A549 (cell line): ENCODE measurements at regions of chr19 and their contacts with region 1.

Region 1: GRCh38 chr19:41563854-41564514 is 12.0 kb upstream of the CEACAM21 start:
- DNase-seq: peak in 1 of 2 experiments; percentile 35
- ATAC-seq: peak in 1 of 2 experiments; percentile 28; a peak in 2 of 6 replicates
- H3K4me3 ChIP-seq: no peak overlapping the region
- H3K27ac ChIP-seq: no peak overlapping the region
- H3K4me1 ChIP-seq: peaks cover 13% of the 10 kb centered on the region; the same call in 2 of the 3 replicates
- CTCF ChIP-seq: no peak
- EP300 ChIP-seq: no peak
- POLR2A ChIP-seq: no peak
- RAD21 ChIP-seq: no peak

Region 2: GRCh38 chr19:41420101-41420880 is 143.7 kb before region 1 on chr19:
- CTCF ChIA-PET with region 1: interaction called, 18 read pairs
- POLR2A ChIA-PET with region 1: no interaction called
- DNase-seq: no peak
- ATAC-seq: no peak
- H3K4me3 ChIP-seq: no peak overlapping the region
- H3K27ac ChIP-seq: no peak overlapping the region
- H3K4me1 ChIP-seq: no peaks in the 10 kb centered on the region
- CTCF ChIP-seq: no peak
- EP300 ChIP-seq: no peak
- POLR2A ChIP-seq: no peak
- RAD21 ChIP-seq: no peak

Region 3: DNA sequence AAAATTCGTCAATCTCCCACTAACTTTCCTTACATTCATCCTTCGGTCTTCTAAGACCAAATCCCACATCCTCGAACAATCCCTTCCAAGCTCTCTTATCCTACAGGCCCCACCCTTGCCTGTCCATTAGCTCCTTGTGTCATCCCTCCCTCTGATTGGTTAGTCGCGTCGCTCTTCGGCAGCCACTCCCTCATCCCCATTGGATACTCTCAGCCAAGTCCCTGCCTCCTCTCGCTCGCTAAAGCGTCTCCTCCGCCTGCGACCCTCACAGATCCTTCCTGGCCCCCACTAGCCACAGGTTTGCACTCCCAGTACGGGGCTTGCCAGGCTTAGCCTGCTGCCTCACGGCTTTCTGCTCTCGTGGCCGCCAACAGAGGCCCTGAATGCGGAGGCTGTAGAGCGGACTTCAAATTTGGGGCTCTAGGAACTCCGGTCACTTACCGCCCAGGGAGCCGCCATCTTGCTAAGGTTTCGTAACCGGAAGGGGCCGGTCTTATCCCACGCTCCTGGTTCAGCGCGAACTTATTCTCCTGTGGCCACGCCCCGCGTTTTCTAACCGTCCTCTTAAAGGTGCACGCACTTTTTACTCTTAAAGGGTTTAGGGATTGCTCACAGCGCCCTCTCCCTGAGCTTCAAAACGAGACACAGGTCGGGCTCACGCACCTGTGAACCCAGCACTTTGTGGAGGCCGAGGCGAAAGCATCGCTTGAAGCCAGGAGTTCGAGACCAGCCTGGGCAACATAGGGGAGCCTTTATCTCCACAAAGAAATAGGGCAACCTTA is 124.4 kb before region 1 on chr19 and contains the start of gene DMAC2:
- CTCF ChIA-PET with region 1: interaction called, 1,358 read pairs
- POLR2A ChIA-PET with region 1: interaction called, 10 read pairs
- DNase-seq: peak; percentile 100
- ATAC-seq: peak; percentile 96 to 99
- H3K4me3 ChIP-seq: peak within 1 kb of the TSS; percentile 52
- H3K27ac ChIP-seq: peak within 1 kb of the TSS; percentile 81 to 86
- H3K4me1 ChIP-seq: peaks cover 13% of the 10 kb centered on the region; the same call in 2 of the 3 replicates
- CTCF ChIP-seq: peak; percentile 85
- EP300 ChIP-seq: no peak; a peak in 1 of 5 replicates
- POLR2A ChIP-seq: peak; percentile 80
- RAD21 ChIP-seq: peak; percentile 38 to 51; a peak in 2 of 5 replicates
- polyA plus RNA-seq, gene DMAC2: 128 and 132 TPM in 2 replicates

Region 4: GRCh38 chr19:41495589-41495988 is 68.4 kb before region 1 on chr19:
- CTCF ChIA-PET with region 1: interaction called, 16 read pairs
- POLR2A ChIA-PET with region 1: no interaction called
- DNase-seq: no peak
- ATAC-seq: no peak
- H3K4me3 ChIP-seq: no peak overlapping the region
- H3K27ac ChIP-seq: no peak overlapping the region
- H3K4me1 ChIP-seq: peaks cover 3% of the 10 kb centered on the region
- CTCF ChIP-seq: no peak
- EP300 ChIP-seq: no peak
- POLR2A ChIP-seq: no peak
- RAD21 ChIP-seq: no peak

Region 5: GRCh38 chr19:41541990-41542584 is 21.9 kb before region 1 on chr19:
- CTCF ChIA-PET with region 1: interaction called, 67 read pairs
- POLR2A ChIA-PET with region 1: no interaction called
- DNase-seq: peak; percentile 69 to 73
- ATAC-seq: peak; percentile 44 to 69; a peak in 4 of 6 replicates
- H3K4me3 ChIP-seq: no peak overlapping the region
- H3K27ac ChIP-seq: no peak overlapping the region
- H3K4me1 ChIP-seq: no peaks in the 10 kb centered on the region
- CTCF ChIP-seq: peak; percentile 88
- EP300 ChIP-seq: no peak
- POLR2A ChIP-seq: no peak
- RAD21 ChIP-seq: peak; percentile 33 to 54; a peak in 4 of 5 replicates